ENCODE measurements at regions of chr20 and their contacts with region 1.

Region 1: GRCh38 chr20:32762149-32762753 is at the start of gene DNMT3B:
- DNase-seq: peak; percentile 84
- ATAC-seq: peak; percentile 80
- H3K4me3 Mint-ChIP-seq: peak within 1 kb of the TSS; percentile 85
- H3K27ac Mint-ChIP-seq: peak within 1 kb of the TSS; percentile 67
- H3K4me1 Mint-ChIP-seq: peaks cover 29% of the 10 kb centered on the region
- H3K27me3 Mint-ChIP-seq: peaks cover 2% of the 10 kb centered on the region
- total RNA-seq, gene DNMT3B: 9.0 to 10.0 TPM

Region 2: DNA sequence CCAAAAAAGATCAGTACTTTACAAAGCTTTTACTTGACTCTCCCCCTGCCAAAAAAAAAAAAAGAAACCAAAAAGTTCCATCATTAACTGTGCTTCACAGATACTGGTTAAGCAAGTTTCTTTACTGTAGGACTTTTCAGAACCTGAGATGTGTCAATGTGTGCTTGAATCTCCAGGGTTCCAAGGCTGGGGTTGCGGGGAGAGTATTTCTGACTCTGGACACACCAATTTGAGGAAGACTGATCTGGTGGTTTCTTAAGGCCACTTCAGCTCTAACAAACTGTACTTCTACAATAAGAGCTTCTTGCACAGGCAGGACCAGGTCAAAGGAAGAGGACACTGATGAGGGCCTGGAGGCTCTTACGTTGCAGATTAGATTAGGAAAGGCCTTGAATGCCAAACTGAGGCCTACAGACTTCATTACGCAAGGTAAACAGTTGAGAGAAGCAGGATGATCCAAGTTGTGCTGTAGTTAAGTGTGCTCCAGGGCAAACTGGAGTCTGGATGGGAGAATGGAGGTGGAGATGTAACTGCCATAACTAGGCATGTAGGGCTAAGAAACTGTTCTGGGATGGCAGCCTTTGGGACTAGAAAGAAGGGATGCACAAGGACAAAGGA is 43.4 kb before region 1 on chr20:
- CTCF ChIA-PET with region 1: no interaction called
- POLR2A ChIA-PET with region 1: no interaction called
- DNase-seq: no peak
- ATAC-seq: no peak
- H3K4me3 Mint-ChIP-seq: no peak overlapping the region
- H3K27ac Mint-ChIP-seq: peak overlapping the region; percentile 4
- H3K4me1 Mint-ChIP-seq: no peaks in the 10 kb centered on the region
- H3K27me3 Mint-ChIP-seq: no peaks in the 10 kb centered on the region

Region 3: DNA sequence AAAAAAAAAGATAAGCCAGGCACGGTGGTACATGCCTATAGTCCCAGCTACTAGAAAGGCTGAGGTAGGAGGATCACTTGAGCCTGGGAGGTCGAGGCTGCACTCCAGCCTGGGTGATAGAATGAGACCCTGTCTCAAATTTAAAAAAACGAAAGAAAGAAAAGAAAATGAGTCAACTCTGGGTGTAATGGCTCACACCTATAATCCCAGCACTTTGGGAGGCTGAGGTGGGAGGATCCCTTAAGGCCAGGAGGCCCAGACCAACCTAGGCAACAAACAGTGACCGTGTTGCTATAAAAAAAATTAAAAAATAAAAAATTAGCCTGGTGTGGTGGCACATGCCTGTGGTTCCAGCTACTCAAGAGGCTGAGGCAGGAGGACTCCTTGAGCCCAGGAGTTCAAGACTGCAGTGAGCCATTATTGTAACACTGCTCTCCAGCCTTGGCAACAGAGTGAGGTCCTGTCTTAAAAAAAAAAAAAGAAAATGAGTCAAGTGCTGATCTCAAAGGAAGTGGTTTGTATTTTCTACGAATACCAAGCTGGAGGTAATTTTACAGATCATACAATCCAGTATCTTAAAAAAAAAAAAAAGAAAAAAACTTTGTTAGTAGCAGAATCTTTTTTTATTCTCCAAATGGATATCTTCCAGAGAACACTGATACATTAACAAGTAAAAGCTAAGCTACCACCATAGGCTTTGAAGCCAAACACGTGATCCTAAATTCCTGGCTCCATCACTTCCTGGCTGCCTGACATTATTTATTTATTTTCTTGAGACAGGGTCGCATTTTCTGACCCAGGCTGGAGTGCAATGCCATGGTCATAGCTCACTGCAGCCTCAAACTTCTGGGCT is 24.7 kb before region 1 on chr20:
- CTCF ChIA-PET with region 1: interaction called, 15 read pairs
- POLR2A ChIA-PET with region 1: interaction called, 15 read pairs
- DNase-seq: peak; percentile 71
- ATAC-seq: peak; percentile 81
- H3K4me3 Mint-ChIP-seq: peak overlapping the region; percentile 48
- H3K27ac Mint-ChIP-seq: peak overlapping the region; percentile 90
- H3K4me1 Mint-ChIP-seq: peaks cover 52% of the 10 kb centered on the region
- H3K27me3 Mint-ChIP-seq: no peaks in the 10 kb centered on the region

Region 4: GRCh38 chr20:32743237-32744112 is 18.8 kb before region 1 on chr20 and contains the start of gene COMMD7:
- CTCF ChIA-PET with region 1: interaction called, 15 read pairs
- POLR2A ChIA-PET with region 1: interaction called, 15 read pairs
- DNase-seq: peak; percentile 86
- ATAC-seq: peak; percentile 83
- H3K4me3 Mint-ChIP-seq: peak within 1 kb of the TSS; percentile 98
- H3K27ac Mint-ChIP-seq: peak within 1 kb of the TSS; percentile 98
- H3K4me1 Mint-ChIP-seq: peaks cover 45% of the 10 kb centered on the region
- H3K27me3 Mint-ChIP-seq: no peaks in the 10 kb centered on the region
- total RNA-seq, gene COMMD7: 65.5 to 68.4 TPM

Region 5: DNA sequence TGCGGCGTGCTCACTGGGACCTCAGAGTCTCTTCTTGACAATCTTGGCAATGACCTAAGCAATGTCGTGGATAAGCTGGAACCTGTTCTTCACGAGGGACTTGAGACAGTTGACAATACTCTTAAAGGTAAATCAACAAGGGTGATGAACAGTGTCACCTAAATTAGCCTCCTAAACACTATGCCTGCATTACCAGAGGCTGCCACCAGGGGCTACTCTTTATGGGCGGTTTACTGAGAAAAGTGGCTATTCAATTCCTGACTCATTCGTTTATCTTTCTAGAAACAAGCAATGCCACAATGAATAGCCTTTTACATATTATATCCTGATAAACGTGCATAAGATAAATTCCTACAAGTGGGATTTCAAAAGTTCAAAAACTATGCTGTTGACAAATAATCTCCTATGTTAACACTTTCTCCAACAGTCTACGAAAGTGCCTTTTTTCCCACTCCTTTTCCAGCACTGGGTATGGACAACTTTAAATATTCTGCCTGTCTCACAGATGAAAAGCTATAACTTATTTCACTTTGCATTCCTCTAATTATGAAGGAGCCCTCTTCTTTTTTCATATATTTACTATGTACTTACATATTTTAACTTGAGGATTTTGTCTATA is 407.0 kb after region 1 on chr20:
- CTCF ChIA-PET with region 1: no interaction called
- POLR2A ChIA-PET with region 1: no interaction called
- DNase-seq: peak; percentile 45
- ATAC-seq: no peak
- H3K4me3 Mint-ChIP-seq: no peak overlapping the region
- H3K27ac Mint-ChIP-seq: no peak overlapping the region
- H3K4me1 Mint-ChIP-seq: no peaks in the 10 kb centered on the region
- H3K27me3 Mint-ChIP-seq: peaks cover 9% of the 10 kb centered on the region

Measured in activated CD8-positive, alpha-beta T cell treated with anti-CD3 and anti-CD28 coated beads, Interleukin-2, amount 10 ng/mL, durations not matched to agents 7 days and 5 days (primary cell).